ENCODE measurements at regions of chr17 and their contacts with region 1.

Region 1: DNA sequence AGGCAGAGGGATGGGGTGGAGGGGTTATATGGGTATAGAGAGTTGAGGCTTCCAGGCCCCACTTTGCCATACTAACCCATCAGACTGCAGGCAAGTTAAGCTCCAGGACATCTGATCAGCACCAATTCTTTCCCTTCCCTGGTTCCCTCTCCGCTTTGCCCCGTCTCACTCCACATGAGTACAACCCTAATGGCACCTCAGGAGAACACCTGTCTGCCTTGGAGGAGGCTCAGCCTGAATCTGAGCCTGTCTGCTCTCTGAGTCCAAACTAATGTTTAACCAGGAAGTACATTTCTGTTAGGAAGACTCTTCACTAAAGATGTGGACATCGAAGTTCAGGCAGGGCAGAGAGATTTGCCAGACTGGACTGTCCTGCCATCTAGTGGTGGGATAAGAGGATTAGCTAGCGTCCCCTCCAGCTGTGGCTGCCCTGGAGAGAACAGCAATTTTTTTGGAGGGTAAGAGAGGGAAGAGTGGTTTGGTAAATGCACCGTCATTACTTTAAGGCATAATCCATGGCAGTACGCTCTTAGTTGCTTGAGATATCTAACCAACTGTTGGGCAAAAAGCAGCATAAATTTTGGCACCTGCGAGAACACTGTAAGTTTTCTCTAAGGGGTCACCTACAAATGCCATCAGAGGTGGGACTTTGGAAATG is 29.2 kb upstream of the LRRC75A start:
- DNase-seq: peak; percentile 81
- H3K4me3 ChIP-seq: no peak overlapping the region
- H3K27ac ChIP-seq: no peak overlapping the region
- H3K27me3 ChIP-seq: no peaks in the 10 kb centered on the region
- CTCF ChIP-seq: peak; percentile 94

Region 2: DNA sequence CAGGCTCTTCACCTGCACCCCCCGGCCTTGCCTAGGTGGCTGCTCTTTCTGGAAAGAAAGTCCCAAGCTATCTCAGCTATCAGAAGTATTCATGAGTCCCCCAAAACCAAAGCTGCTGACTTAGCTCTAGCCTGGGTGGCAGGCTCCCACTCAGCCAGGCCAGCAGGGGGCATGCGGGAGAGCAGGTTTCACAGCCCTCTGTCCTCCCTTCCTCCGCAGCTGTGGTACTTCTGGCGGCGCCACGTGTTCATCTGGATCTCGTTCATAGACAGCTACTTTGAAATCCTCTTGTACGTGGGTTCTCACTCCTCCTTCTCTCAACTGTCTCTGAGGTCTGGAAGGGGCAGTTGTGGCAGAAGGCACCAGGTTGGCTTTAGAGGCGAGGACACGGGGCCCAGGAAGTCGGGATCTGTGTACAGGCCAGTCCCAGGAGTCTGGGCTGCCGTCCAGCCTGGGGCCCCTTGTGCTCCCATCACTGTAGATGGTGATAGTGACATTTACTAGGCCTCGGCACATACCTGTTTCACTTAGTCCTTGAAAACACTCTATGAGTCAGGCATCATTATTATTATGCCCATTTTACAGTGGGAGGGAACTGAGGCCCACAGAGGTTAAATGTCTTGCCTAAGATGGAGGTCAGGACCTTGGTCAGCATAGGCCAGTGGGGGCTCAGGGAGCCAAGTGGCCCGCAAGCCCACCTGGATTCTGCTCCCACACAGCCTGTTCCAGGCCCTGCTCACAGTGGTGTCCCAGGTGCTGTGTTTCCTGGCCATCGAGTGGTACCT is 92.9 kb before region 1 on chr17:
- CTCF ChIA-PET with region 1: interaction called, 16 read pairs
- POLR2A ChIA-PET with region 1: no interaction called
- DNase-seq: no peak
- H3K4me3 ChIP-seq: no peak overlapping the region
- H3K27ac ChIP-seq: peak overlapping the region; percentile 52
- H3K27me3 ChIP-seq: no peaks in the 10 kb centered on the region
- CTCF ChIP-seq: peak; percentile 81

Region 3: GRCh38 chr17:16444258-16444886 is 76.8 kb before region 1 on chr17:
- CTCF ChIA-PET with region 1: interaction called, 301 read pairs
- POLR2A ChIA-PET with region 1: interaction called, 8 read pairs
- DNase-seq: no peak
- H3K4me3 ChIP-seq: no peak overlapping the region
- H3K27ac ChIP-seq: peak overlapping the region; percentile 52
- H3K27me3 ChIP-seq: no peaks in the 10 kb centered on the region
- CTCF ChIP-seq: no peak

Region 4: DNA sequence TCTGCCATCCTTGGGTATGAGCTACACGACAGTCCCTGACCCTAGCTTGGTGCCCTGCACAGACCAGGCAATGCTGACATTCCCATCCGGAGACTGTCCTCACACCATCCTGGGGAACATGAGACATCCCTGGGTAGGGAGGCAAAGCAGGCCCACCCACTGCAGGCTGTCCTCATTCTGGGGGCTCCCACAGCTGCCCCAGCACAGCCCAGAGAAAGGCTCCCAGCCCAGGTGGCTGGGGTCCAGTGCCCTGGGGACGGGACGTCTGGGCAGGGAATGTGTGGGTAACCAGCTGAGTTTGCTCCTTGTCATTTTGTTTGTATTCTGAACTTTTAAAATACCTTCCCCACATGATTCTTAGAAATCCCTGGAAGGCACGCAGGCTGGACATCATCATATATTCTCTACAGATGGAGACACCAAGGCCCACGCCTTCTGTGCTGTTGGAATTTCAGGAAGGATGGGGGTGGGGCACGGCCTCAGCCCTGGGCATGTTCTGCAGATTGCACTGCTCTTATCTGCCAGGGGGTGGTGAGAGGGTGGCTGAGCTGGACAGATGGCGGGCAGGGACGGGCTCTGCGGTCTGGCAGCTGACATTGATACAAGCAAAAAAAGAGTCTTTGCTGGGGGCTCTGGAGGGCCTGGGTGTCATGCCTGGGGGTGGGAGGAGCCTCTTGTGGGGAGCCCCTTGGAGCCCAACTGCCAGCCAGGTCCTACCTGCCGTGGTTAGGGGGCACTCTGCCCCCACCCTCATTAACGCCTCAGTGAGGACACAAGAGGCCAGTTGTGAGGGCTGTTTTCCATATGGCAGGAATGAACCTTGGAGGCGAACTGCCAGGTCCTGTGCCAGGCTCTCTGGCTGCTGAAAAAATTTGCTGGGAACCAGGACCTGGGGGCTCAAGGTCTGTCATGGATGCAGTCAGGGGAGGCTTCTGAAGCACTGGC is 57.6 kb before region 1 on chr17:
- CTCF ChIA-PET with region 1: interaction called, 22 read pairs
- POLR2A ChIA-PET with region 1: interaction called, 5 read pairs
- DNase-seq: peak; percentile 50
- H3K4me3 ChIP-seq: no peak overlapping the region
- H3K27ac ChIP-seq: peak overlapping the region; percentile 75
- H3K27me3 ChIP-seq: no peaks in the 10 kb centered on the region
- CTCF ChIP-seq: peak; percentile 47

Measured in AG04450 (cell line).